ENCODE measurements at regions of chr7 and their contacts with region 1.

Region 1: DNA sequence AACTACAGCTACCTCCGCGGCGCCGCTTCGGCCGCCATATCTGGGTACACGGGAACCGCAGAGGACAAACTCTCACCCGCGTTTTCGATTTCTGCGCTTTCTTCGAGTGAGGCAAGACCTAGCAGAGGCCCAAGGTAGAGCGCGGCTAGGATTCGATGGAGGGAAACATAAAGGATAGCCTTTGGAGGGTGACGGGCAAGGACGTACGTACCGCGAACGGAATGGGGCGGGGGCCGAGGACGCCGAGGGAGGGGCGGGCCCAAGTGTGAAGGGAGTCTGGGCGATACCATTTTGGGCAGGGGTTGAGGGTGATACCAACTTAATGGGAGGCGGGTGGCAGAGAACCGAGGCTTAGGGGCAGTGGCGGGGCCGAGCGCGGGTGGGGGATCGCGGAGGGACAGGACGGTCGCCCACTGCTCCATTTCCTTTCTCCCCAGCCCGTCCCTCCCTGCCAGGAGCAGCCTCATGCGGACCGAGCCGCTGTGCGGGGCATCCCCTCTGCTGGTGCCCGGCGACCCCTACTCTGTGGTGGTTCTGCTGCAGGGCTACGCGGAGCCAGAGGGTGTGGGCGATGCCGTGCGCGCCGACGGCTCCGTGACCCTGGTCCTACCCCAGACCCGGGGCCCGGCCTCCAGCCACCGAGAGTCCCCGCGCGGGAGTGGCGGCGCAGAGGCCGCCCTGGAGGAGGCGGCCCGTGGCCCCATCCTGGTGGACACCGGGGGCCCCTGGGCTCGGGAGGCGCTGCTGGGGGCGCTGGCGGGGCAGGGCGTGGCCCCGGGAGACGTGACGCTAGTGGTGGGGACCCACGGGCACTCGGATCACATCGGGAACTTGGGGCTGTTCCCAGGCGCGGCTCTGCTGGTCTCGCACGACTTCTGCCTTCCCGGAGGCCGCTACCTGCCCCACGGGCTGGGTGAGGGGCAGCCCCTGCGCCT is at the start of gene MBLAC1:
- DNase-seq: peak; percentile 93
- H3K4me3 Mint-ChIP-seq: peak within 1 kb of the TSS; percentile 100
- H3K27ac Mint-ChIP-seq: peak within 1 kb of the TSS; percentile 100
- H3K4me1 Mint-ChIP-seq: peaks cover 51% of the 10 kb centered on the region
- H3K27me3 Mint-ChIP-seq: no peaks in the 10 kb centered on the region
- total RNA-seq, gene MBLAC1: 2.3 to 3.6 TPM

Region 2: GRCh38 chr7:100049441-100050311 is 77.5 kb before region 1 on chr7 and contains the start of gene ZSCAN21:
- CTCF ChIA-PET with region 1: no interaction called
- POLR2A ChIA-PET with region 1: no interaction called
- DNase-seq: peak; percentile 79
- H3K4me3 Mint-ChIP-seq: peak within 1 kb of the TSS; percentile 87
- H3K27ac Mint-ChIP-seq: peak within 1 kb of the TSS; percentile 97
- H3K4me1 Mint-ChIP-seq: peaks cover 30% of the 10 kb centered on the region
- H3K27me3 Mint-ChIP-seq: no peaks in the 10 kb centered on the region
- total RNA-seq, gene ZSCAN21: 6.6 to 9.1 TPM

Region 3: DNA sequence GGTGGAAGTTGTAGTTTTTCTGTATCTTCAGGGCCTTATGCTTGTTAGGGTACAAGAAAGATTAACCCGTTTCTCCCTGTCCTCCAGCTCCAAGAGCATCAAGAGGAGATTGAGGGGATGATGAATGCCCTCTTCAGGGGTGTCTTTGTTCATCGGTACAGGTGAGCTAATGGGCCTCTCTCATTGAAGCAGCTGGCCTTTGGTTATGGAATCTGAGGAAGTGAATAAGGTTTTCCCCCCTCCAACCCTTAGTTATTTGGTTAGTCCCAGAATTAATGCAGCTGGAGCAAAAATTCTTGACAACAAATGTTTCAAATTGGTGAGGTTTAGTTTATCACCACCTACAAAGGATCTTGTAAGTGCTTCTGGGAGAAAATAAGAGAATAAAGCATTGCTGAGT is 68.0 kb after region 1 on chr7:
- CTCF ChIA-PET with region 1: no interaction called
- POLR2A ChIA-PET with region 1: no interaction called
- DNase-seq: no peak
- H3K4me3 Mint-ChIP-seq: no peak overlapping the region
- H3K27ac Mint-ChIP-seq: peak overlapping the region; percentile 25
- H3K4me1 Mint-ChIP-seq: peaks cover 44% of the 10 kb centered on the region
- H3K27me3 Mint-ChIP-seq: no peaks in the 10 kb centered on the region

Region 4: GRCh38 chr7:100215895-100216294 is 88.7 kb after region 1 on chr7:
- CTCF ChIA-PET with region 1: interaction called, 39 read pairs
- POLR2A ChIA-PET with region 1: no interaction called
- DNase-seq: no peak
- H3K4me3 Mint-ChIP-seq: no peak overlapping the region
- H3K27ac Mint-ChIP-seq: no peak overlapping the region
- H3K4me1 Mint-ChIP-seq: peaks cover 64% of the 10 kb centered on the region
- H3K27me3 Mint-ChIP-seq: no peaks in the 10 kb centered on the region